ENCODE measurements at regions of chr14 and their contacts with region 1.

Region 1: GRCh38 chr14:91996948-91997371 is 42.9 kb downstream of the TRIP11 start:
- DNase-seq: no peak
- ATAC-seq: peak; percentile 84
- H3K4me3 ChIP-seq: no peak overlapping the region
- H3K27ac ChIP-seq: no peak overlapping the region
- H3K4me1 ChIP-seq: no peaks in the 10 kb centered on the region
- H3K27me3 ChIP-seq: no peaks in the 10 kb centered on the region
- CTCF ChIP-seq: peak; percentile 57 to 60 (median 59)
- EP300 ChIP-seq: no peak
- POLR2A ChIP-seq: no peak
- RAD21 ChIP-seq: peak; percentile 61

Region 2: GRCh38 chr14:91947471-91948184 is 49.3 kb before region 1 on chr14 and contains the start of gene FBLN5:
- CTCF ChIA-PET with region 1: no interaction called
- POLR2A ChIA-PET with region 1: no interaction called
- RAD21 ChIA-PET with region 1: no interaction called
- SMC1A ChIA-PET with region 1: no interaction called
- in situ Hi-C with region 1: no loop called
- intact Hi-C with region 1: no loop called
- DNase-seq: no peak
- ATAC-seq: no peak
- H3K4me3 ChIP-seq: no peak within 1 kb of the TSS
- H3K27ac ChIP-seq: no peak within 1 kb of the TSS
- H3K4me1 ChIP-seq: no peaks in the 10 kb centered on the region
- H3K27me3 ChIP-seq: peaks cover 0 to 9% of the 10 kb centered on the region in 2 experiments; a peak in 2 of 4 replicates
- CTCF ChIP-seq: no peak
- EP300 ChIP-seq: no peak
- POLR2A ChIP-seq: no peak
- RAD21 ChIP-seq: no peak
- polyA plus RNA-seq, gene FBLN5: 0.03 to 0.13 TPM

Region 3: DNA sequence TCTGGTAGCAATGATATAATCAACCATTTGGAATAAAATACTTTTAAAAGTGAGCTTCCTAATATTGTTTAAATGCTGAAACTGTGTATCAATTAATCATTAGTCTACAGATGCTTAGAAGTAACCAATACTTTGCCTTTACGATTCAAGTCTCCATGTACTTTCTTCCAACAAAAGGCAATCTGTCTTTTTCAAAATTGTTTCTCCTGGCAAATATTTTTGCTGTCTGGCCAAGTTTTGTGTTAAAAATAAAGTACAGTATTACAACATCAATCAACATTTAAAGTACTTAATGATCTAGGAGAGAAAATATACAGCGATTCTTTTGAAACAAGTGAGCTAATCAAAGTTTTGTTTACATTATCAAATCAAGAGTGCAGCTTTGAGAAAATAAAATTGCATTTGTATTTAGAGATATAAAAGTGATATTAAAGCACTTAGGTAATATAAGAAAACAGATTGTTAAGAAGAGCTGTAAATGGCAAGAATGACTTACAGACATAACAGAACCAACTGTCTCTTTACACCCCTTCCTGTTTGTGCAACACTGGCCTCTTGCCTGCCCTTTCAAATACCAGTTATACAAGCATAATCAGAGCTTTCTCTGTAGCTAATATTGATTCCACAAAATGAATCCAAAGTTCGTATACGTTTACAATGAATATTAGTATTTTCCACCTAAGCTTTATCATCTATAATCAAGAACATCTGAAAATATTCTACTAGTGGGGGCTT is 11.3 kb before region 1 on chr14:
- CTCF ChIA-PET with region 1: interaction called, 16 read pairs
- POLR2A ChIA-PET with region 1: no interaction called
- RAD21 ChIA-PET with region 1: interaction called, 3 read pairs
- SMC1A ChIA-PET with region 1: interaction called, 6 read pairs
- in situ Hi-C with region 1: no loop called
- intact Hi-C with region 1: no loop called
- DNase-seq: no peak
- ATAC-seq: no peak
- H3K4me3 ChIP-seq: no peak overlapping the region
- H3K27ac ChIP-seq: no peak overlapping the region
- H3K4me1 ChIP-seq: no peaks in the 10 kb centered on the region
- H3K27me3 ChIP-seq: no peaks in the 10 kb centered on the region
- CTCF ChIP-seq: no peak
- EP300 ChIP-seq: no peak
- POLR2A ChIP-seq: no peak
- RAD21 ChIP-seq: no peak

Region 4: DNA sequence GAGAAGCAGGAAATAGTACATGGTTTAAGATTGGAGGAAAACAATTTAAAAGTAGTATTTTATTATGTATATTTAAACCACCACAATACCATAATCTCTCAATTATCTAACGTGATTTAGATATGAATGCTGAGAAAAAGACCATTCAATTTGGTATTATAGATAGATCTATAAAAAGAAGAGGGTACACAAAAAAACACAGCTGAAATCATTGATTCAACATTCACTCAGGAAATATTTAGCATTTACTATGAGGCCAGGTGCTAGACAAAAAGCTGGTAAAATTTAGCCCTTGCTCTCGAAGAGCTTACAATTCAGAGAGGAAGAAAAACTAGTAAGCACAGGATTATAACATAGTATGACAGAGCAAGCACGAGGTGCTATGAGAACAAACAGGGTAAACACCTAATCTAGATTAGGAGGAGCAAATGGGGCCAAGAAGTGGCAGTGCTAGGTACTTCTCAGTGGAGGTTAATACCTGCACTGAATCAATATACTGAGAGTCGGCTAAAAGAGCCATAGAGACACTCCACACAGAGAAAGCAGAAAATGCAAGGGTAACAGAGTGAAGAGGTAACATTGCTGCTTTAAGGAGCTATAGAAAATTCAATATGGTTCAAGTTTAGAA is 15.3 kb after region 1 on chr14:
- CTCF ChIA-PET with region 1: interaction called, 28 read pairs
- POLR2A ChIA-PET with region 1: no interaction called
- RAD21 ChIA-PET with region 1: no interaction called
- SMC1A ChIA-PET with region 1: no interaction called
- in situ Hi-C with region 1: no loop called
- intact Hi-C with region 1: no loop called
- DNase-seq: no peak
- ATAC-seq: no peak
- H3K4me3 ChIP-seq: no peak overlapping the region
- H3K27ac ChIP-seq: no peak overlapping the region
- H3K4me1 ChIP-seq: no peaks in the 10 kb centered on the region
- H3K27me3 ChIP-seq: no peaks in the 10 kb centered on the region
- CTCF ChIP-seq: no peak
- EP300 ChIP-seq: no peak
- POLR2A ChIP-seq: no peak
- RAD21 ChIP-seq: no peak